ENCODE measurements at regions of chr14 and their contacts with region 1.

Region 1: DNA sequence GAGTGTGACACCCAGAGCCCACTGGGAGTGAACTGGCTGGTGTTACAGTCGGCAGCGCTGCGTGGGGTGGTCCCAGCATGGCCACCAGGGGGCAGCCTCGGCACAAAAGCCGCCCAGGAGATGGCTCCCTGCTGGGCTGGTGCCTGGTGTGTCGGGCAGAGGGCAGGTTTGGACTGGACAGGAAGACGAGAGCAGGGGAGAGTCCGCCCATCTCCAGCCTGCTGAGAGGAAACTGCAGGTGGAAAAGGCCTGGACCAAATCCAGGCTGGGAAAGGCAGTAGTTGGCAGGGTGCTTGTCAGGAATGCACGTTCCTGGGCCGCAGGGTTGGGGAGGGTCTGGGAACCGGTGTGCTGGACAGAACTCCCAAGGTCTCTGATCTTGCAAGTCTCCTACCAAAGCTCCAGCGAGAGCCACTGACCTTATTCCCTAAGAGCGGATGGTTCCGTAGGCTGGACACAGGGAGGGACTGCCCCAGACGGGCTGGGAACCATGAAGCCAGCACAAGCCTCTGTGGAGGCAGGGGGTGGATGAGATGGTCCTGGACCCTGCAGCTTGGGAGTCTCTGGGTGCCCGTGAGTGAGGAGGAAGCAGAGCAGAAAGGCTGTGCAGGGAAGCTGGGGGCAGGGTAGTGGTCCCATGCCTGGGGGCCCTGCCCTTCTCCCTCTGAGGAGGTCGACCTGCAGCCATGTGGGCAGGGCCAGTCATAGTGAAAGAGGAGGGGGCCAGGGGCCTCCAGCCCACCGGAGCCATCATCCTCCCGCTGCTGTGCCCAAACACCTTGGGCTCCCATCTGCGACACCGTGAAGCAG is 1.8 kb downstream of the AHNAK2 start:
- DNase-seq: peak; percentile 81 to 95 (median 87)
- H3K4me3 ChIP-seq: no peak overlapping the region
- H3K27ac ChIP-seq: no peak overlapping the region
- H3K4me1 ChIP-seq: peaks cover 0 to 36% (median 5%) of the 10 kb centered on the region in 3 donors
- H3K27me3 ChIP-seq: peaks cover 2% of the 10 kb centered on the region
- CTCF ChIP-seq: peak; percentile 97

Region 2: GRCh38 chr14:105045710-105046326 is 69.4 kb after region 1 on chr14:
- intact Hi-C with region 1: loop called (anchors 10 kb)
- DNase-seq: peak; percentile 87 to 94 (median 91)
- H3K4me3 ChIP-seq: no peak overlapping the region
- H3K27ac ChIP-seq: peak overlapping the region in 1 of 2 donors; percentile 7
- H3K4me1 ChIP-seq: peaks cover 0 to 11% (median 0%) of the 10 kb centered on the region in 3 donors
- H3K27me3 ChIP-seq: no peaks in the 10 kb centered on the region
- CTCF ChIP-seq: peak; percentile 99

Region 3: GRCh38 chr14:105126981-105127329 is 150.6 kb after region 1 on chr14:
- intact Hi-C with region 1: no loop called
- DNase-seq: no peak
- H3K4me3 ChIP-seq: no peak overlapping the region
- H3K27ac ChIP-seq: no peak overlapping the region
- H3K4me1 ChIP-seq: no peaks in the 10 kb centered on the region
- H3K27me3 ChIP-seq: no peaks in the 10 kb centered on the region
- CTCF ChIP-seq: no peak

Region 4: GRCh38 chr14:105220699-105221597 is 244.5 kb after region 1 on chr14:
- intact Hi-C with region 1: no loop called
- DNase-seq: no peak
- H3K4me3 ChIP-seq: no peak overlapping the region
- H3K27ac ChIP-seq: peak overlapping the region in 1 of 2 donors; percentile 49
- H3K4me1 ChIP-seq: peaks cover 0 to 15% (median 13%) of the 10 kb centered on the region in 3 donors
- H3K27me3 ChIP-seq: no peaks in the 10 kb centered on the region
- CTCF ChIP-seq: no peak

Measured in kidney (tissue), 22 donors.